Head of caudate nucleus (tissue), 42 donors: ENCODE measurements at regions of chr10 and their contacts with region 1.

Region 1: GRCh38 chr10:72375585-72375984 is 20.9 kb upstream of the DNAJB12 start:
- DNase-seq: peak in 41 of 42 donors; percentile 24 to 81 (median 59)

Region 2: GRCh38 chr10:72567884-72568640 is 192.5 kb after region 1 on chr10:
- intact Hi-C with region 1: loop called (anchors 5 kb)
- DNase-seq: peak in 4 of 42 donors; percentile 7 to 49 (median 26)

Region 3: GRCh38 chr10:72692057-72692910 is 316.7 kb after region 1 on chr10 and contains the start of gene MCU:
- intact Hi-C with region 1: loop called (anchors 10 kb)
- DNase-seq: peak; percentile 89 to 100 (median 97)